ENCODE measurements at regions of chr4 and their contacts with region 1.

Region 1: GRCh38 chr4:99300934-99301333 is 10.1 kb upstream of the ADH1A start:
- DNase-seq: peak; percentile 98
- H3K4me3 ChIP-seq: no peak overlapping the region
- H3K27ac ChIP-seq: peak overlapping the region; percentile 72 to 78 (median 75)
- H3K4me1 ChIP-seq: peaks cover 11 to 27% (median 22%) of the 10 kb centered on the region in 4 donors
- H3K27me3 ChIP-seq: no peaks in the 10 kb centered on the region
- CTCF ChIP-seq: no peak
- EP300 ChIP-seq: peak; percentile 56
- POLR2A ChIP-seq: no peak

Region 2: DNA sequence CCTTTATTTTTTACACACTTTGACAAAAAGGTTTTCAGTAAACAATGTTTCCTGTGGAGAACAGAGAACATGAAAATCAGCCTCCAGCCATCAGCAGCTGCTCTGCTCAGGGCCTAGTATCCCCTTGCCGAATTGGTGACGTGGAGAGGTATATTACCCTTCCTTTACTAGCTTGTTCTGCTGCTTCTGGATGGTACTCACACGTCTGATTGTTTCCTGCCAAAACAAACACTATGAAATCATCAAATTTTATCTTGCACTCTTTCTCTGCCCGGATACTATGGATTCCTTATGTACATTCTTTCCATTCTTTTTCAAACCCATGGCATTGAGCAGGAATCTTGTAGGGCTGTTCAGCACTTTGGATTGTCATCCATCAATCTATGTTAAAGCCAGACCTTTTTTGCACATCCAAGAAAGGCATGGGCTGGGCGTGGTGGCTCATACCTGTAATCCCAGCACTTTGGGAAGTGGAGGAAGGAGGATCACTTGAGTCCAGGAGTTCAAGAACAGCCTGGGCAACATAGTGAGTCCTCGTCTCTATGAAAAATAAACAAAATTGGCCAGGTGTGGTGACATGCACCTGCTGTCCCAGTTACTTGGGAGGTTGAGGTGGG is 324.1 kb before region 1 on chr4:
- intact Hi-C with region 1: no loop called
- DNase-seq: no peak
- H3K4me3 ChIP-seq: no peak overlapping the region
- H3K27ac ChIP-seq: no peak overlapping the region
- H3K4me1 ChIP-seq: no peaks in the 10 kb centered on the region
- H3K27me3 ChIP-seq: no peaks in the 10 kb centered on the region
- CTCF ChIP-seq: no peak
- EP300 ChIP-seq: no peak
- POLR2A ChIP-seq: no peak

Region 3: GRCh38 chr4:99144070-99144469 is 156.9 kb before region 1 on chr4 and contains the start of gene ADH4:
- intact Hi-C with region 1: no loop called
- DNase-seq: no peak
- H3K4me3 ChIP-seq: no peak within 1 kb of the TSS
- H3K27ac ChIP-seq: peak within 1 kb of the TSS in 2 of 4 donors; percentile 0 to 24
- H3K4me1 ChIP-seq: peaks cover 0 to 8% (median 0%) of the 10 kb centered on the region in 4 donors
- H3K27me3 ChIP-seq: no peaks in the 10 kb centered on the region
- CTCF ChIP-seq: no peak
- EP300 ChIP-seq: no peak
- POLR2A ChIP-seq: no peak
- total RNA-seq, gene ADH4: 0.57 to 8.0 (median 0.75) TPM

Region 4: DNA sequence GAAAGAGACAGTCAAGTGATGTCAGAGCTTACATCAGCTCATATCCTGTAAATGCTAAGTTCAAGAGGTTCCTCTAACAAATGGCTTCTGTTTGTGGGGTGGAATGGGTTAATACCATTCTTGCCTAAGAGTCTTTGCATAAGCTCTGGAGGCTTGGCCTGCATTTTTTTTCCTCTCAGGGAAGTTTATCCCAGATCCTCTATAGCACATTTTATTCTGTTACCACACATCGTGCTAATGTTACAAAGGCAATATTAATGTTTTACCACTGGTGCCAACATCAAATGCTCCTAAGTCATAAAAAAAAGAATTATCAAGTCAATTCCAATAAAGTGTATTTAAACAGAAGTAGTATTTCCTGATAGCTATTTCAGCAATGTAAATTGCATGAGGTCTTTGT is 79.0 kb before region 1 on chr4:
- intact Hi-C with region 1: loop called (anchors 5 kb)
- DNase-seq: no peak
- H3K4me3 ChIP-seq: no peak overlapping the region
- H3K27ac ChIP-seq: peak overlapping the region in 2 of 4 donors; percentile 7 to 20
- H3K4me1 ChIP-seq: peaks cover 0 to 13% (median 8%) of the 10 kb centered on the region in 4 donors
- H3K27me3 ChIP-seq: no peaks in the 10 kb centered on the region
- CTCF ChIP-seq: no peak
- EP300 ChIP-seq: no peak
- POLR2A ChIP-seq: no peak

Measured in esophagus muscularis mucosa (tissue), 4 donors.